Motor neuron (in vitro differentiated cells): ENCODE measurements at regions of chr10 and their contacts with region 1.

Region 1: GRCh38 chr10:112332509-112333228 is 41.2 kb upstream of the ACSL5 start:
- ATAC-seq: no peak
- H3K4me3 ChIP-seq: no peak overlapping the region
- H3K27ac ChIP-seq: no peak overlapping the region
- H3K4me1 ChIP-seq: no peaks in the 10 kb centered on the region

Region 2: GRCh38 chr10:112183329-112184051 is 149.2 kb before region 1 on chr10 and contains the start of gene GPAM:
- in situ Hi-C with region 1: no loop called
- ATAC-seq: peak; percentile 94 to 99 (median 96)
- H3K4me3 ChIP-seq: peak within 1 kb of the TSS; percentile 77 to 90 (median 83)
- H3K27ac ChIP-seq: peak within 1 kb of the TSS; percentile 72 to 84
- H3K4me1 ChIP-seq: peaks cover 6 to 7% of the 10 kb centered on the region in 2 donors
- total RNA-seq, gene GPAM: 10.4 to 103 (median 14.1) TPM

Region 3: DNA sequence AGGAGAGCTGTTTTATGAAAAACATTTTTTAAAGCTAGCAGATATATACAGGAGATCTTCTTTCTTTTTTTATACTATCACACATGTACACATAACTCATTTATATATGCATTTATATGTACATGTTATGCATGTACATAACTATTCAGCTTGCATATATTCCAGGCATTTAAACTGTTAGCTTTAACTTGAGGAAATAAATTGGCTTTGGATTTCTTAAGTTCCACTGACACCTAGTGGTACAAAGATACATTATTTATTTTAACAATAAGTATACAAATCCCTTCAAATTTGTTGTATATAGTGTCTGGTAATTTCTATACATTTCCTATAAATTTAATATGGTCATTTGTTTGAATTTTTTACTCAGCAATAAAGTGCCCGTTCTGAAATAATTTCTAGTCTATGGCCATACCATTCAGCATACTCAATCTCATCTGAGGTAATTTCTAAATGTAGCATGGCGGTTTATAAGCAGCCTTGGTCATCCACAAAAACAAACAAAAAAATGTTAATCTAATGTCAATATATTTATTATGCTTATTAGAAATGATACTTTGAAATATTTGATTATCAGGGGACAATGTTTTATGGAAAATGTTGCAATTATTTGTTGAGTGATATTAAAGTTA is 102.4 kb after region 1 on chr10:
- in situ Hi-C with region 1: loop called in 2 of 9 experiments (anchors 10 to 25 kb)
- ATAC-seq: peak in 3 of 8 experiments; percentile 43 to 93 (median 45)
- H3K4me3 ChIP-seq: no peak overlapping the region
- H3K27ac ChIP-seq: no peak overlapping the region
- H3K4me1 ChIP-seq: no peaks in the 10 kb centered on the region

Region 4: GRCh38 chr10:112446855-112447711 is 114.4 kb after region 1 on chr10 and contains the starts of genes VTI1A and ZDHHC6:
- in situ Hi-C with region 1: loop called in 1 of 9 experiments (anchors 25 kb)
- ATAC-seq: peak; percentile 91 to 99 (median 98)
- H3K4me3 ChIP-seq: peak within 1 kb of the TSS; percentile 91 to 99 (median 97)
- H3K27ac ChIP-seq: peak within 1 kb of the TSS; percentile 97
- H3K4me1 ChIP-seq: peaks cover 5 to 17% of the 10 kb centered on the region in 2 donors
- total RNA-seq, gene VTI1A: 29.8 to 55.3 (median 42.6) TPM
- total RNA-seq, gene ZDHHC6: 18.5 to 37.3 (median 27.2) TPM

Region 5: GRCh38 chr10:112827951-112828350 is 495.3 kb after region 1 on chr10:
- in situ Hi-C with region 1: no loop called
- ATAC-seq: no peak
- H3K4me3 ChIP-seq: no peak overlapping the region
- H3K27ac ChIP-seq: no peak overlapping the region
- H3K4me1 ChIP-seq: peaks cover 10% of the 10 kb centered on the region in 2 donors